Sciatic nerve (tissue), 2 donors: ENCODE measurements at regions of chr17 and their contacts with region 1.

Region 1: DNA sequence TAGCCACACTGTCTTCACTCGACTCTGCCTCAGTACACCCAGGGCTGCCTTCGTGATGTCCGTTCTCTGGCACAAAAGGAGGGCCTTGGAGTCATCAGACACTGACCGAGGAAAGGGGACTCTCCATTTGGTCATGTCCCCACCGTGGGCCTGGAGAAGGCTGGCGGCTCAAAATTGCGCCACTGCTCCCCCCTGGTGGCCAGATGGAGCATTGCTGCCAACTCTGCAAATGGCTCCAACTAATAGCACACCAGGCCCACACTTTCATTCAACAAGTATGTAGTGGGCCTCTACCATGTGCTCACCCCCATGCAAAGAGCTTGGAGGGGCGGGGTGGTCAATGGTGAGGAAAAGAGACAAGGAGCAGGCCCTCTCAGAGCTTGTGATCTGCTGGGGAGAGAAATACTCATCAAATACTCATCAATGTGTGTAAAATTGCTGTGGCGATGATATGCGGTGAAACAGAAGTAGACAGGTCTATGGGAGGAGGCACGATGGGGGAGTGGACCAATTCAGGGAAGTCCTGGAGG is 5.2 kb upstream of the GRIN2C start:
- DNase-seq: peak; percentile 90
- ATAC-seq: peak; percentile 78

Region 2: DNA sequence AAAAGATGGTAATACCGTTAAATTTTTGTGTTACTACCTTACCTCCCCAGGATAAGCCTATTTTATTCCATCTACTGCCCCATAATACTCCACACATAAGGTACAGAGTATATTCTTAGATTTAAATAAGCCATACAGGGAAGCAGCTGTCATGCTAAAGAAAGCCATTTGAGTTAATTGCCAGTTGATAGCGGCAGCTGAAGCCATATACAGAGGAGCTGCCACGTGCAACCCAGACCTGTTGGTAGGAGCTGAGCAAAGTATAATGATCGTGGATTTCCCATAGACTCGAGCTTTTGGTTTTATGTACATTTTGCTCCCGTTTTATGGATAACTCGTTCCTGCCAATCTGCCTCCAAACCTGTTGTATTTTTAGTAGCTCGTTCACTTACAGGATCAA is 1615.2 kb before region 1 on chr17:
- intact Hi-C with region 1: loop called (anchors 5 kb)
- DNase-seq: no peak
- ATAC-seq: no peak

Region 3: DNA sequence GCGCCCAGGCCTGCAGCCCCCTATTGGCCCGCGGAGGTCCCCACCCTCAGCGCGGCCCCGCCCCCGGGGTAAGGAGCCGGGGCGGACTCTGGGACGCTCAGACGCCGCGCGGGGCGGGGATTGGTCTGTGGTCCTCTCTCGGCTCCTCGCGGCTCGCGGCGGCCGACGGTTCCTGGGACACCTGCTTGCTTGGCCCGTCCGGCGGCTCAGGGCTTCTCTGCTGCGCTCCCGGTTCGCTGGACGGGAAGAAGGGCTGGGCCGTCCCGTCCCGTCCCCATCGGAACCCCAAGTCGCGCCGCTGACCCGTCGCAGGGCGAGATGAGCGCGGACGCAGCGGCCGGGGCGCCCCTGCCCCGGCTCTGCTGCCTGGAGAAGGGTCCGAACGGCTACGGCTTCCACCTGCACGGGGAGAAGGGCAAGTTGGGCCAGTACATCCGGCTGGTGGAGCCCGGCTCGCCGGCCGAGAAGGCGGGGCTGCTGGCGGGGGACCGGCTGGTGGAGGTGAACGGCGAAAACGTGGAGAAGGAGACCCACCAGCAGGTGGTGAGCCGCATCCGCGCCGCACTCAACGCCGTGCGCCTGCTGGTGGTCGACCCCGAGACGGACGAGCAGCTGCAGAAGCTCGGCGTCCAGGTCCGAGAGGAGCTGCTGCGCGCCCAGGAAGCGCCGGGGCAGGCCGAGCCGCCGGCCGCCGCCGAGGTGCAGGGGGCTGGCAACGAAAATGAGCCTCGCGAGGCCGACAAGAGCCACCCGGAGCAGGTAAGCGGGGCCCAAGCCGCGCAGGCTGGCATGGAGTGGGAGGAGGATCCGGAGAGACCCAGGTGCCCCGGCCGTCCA is 116.2 kb before region 1 on chr17 and contains the start of gene NHERF1:
- intact Hi-C with region 1: loop called (anchors 2 kb)
- DNase-seq: peak; percentile 97
- ATAC-seq: peak; percentile 96
- total RNA-seq, gene NHERF1: 39.0 TPM

Region 4: DNA sequence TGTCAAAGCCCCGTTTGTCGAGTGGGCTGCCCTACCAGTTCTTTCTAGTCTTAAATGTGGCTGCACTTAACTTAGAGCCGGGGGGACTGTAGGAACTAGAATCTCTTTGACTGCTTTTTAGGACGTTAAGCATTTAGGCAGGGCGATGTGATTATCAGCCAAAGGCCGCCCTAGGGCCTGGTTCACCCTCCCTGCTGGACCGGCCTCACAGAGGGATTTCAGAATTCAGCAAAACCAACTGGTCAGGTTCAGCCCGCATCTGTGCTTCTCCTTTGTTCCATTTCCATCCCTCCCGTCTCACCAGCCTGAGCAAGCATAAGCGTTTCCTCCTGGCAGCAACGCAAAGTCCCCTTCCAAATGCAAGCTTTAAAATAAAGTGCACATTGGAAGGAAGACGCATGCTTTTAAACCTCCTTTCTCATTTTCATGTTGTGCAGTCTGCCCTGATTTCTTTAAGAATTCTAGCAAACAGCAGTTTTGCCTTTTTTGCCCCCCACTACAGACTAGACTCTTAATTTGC is 72.3 kb before region 1 on chr17:
- intact Hi-C with region 1: loop called (anchors 1 kb)
- DNase-seq: no peak
- ATAC-seq: no peak

Region 5: GRCh38 chr17:74822939-74823367 is 42.0 kb before region 1 on chr17:
- intact Hi-C with region 1: no loop called
- DNase-seq: peak; percentile 69
- ATAC-seq: peak; percentile 79